H1 (cell line): ENCODE measurements at regions of chr14 and their contacts with region 1.

Region 1: DNA sequence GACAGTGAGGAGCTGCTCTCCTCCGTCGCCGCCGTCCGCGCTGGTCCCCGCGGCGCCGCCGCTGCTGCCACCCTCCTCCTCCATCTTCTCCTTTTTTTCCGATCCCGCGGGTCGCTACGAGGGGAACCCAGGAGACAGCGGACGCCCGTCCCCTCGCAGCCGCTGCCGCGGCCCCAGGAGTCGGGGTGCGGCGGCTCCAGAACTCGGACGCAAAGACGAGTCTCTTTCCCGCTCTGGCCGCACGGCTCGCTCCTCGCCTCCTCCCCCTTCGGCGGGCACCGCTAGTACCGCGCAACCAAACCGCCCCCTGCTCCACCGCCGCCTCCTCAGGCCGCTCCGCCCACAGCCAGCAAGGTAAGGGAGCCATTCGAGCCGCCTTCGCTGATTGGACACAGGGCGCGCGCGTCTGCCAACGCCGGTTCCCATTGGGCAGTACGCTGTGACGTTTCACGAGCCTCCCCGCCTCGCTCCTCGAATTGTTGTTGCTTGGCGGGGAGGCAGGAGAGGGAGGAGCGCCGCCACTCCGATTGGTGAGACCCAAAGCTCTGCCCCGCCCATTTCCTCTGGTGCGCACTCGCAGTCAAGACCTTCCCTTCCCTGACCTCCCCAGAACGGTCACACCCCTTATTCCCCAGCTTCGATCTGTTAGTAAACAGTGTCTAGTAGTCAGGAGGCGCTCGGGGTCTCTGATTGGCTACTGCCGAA is at the start of gene RPS6KA5:
- DNase-seq: peak; percentile 98 to 99
- H3K4me3 ChIP-seq: peak within 1 kb of the TSS; percentile 80 to 90 (median 86)
- H3K27ac ChIP-seq: peak within 1 kb of the TSS; percentile 96
- H3K4me1 ChIP-seq: no peaks in the 10 kb centered on the region
- H3K27me3 ChIP-seq: no peaks in the 10 kb centered on the region
- CTCF ChIP-seq: no peak
- EP300 ChIP-seq: peak in 1 of 2 experiments; percentile 41; a peak in 1 of 3 replicates
- POLR2A ChIP-seq: peak; percentile 44 to 83; a peak in 2 of 3 replicates
- RAD21 ChIP-seq: peak in 1 of 2 experiments; percentile 5; a peak in 1 of 4 replicates
- total RNA-seq, gene RPS6KA5: 3.1 and 3.2 TPM in 2 replicates

Region 2: GRCh38 chr14:91078095-91078737 is 17.7 kb after region 1 on chr14:
- CTCF ChIA-PET with region 1: interaction called, 4 read pairs
- POLR2A ChIA-PET with region 1: interaction called, 14 read pairs
- DNase-seq: no peak
- H3K4me3 ChIP-seq: no peak overlapping the region
- H3K27ac ChIP-seq: no peak overlapping the region
- H3K4me1 ChIP-seq: no peaks in the 10 kb centered on the region; a peak in 1 of 7 replicates
- H3K27me3 ChIP-seq: no peaks in the 10 kb centered on the region
- CTCF ChIP-seq: no peak
- EP300 ChIP-seq: no peak
- POLR2A ChIP-seq: no peak
- RAD21 ChIP-seq: no peak

Region 3: GRCh38 chr14:91114079-91115065 is 53.9 kb after region 1 on chr14:
- CTCF ChIA-PET with region 1: interaction called, 3 read pairs
- POLR2A ChIA-PET with region 1: interaction called, 24 read pairs
- DNase-seq: peak; percentile 81 to 88
- H3K4me3 ChIP-seq: peak overlapping the region; percentile 20 to 55 (median 32); a peak in 7 of 8 replicates
- H3K27ac ChIP-seq: peak overlapping the region; percentile 90
- H3K4me1 ChIP-seq: peaks cover 12 to 32% (median 19%) of the 10 kb centered on the region in 4 experiments
- H3K27me3 ChIP-seq: no peaks in the 10 kb centered on the region
- CTCF ChIP-seq: no peak
- EP300 ChIP-seq: peak in 1 of 2 experiments; percentile 7; a peak in 1 of 3 replicates
- POLR2A ChIP-seq: peak; percentile 66 to 75; a peak in 2 of 3 replicates
- RAD21 ChIP-seq: no peak; a peak in 1 of 4 replicates